Activated naive CD4-positive, alpha-beta T cell treated with anti-CD3 and anti-CD28 coated beads for 36 hours (primary cell): ENCODE measurements at regions of chr5 and their contacts with region 1.

Region 1: GRCh38 chr5:80255732-80256479 is at the start of gene SERINC5:
- DNase-seq: peak; percentile 86
- H3K4me3 Mint-ChIP-seq: peak within 1 kb of the TSS; percentile 97
- H3K27ac Mint-ChIP-seq: peak within 1 kb of the TSS; percentile 98
- H3K4me1 Mint-ChIP-seq: peaks cover 43% of the 10 kb centered on the region
- H3K27me3 Mint-ChIP-seq: no peaks in the 10 kb centered on the region
- total RNA-seq, gene SERINC5: 34.8 to 36.4 TPM

Region 2: DNA sequence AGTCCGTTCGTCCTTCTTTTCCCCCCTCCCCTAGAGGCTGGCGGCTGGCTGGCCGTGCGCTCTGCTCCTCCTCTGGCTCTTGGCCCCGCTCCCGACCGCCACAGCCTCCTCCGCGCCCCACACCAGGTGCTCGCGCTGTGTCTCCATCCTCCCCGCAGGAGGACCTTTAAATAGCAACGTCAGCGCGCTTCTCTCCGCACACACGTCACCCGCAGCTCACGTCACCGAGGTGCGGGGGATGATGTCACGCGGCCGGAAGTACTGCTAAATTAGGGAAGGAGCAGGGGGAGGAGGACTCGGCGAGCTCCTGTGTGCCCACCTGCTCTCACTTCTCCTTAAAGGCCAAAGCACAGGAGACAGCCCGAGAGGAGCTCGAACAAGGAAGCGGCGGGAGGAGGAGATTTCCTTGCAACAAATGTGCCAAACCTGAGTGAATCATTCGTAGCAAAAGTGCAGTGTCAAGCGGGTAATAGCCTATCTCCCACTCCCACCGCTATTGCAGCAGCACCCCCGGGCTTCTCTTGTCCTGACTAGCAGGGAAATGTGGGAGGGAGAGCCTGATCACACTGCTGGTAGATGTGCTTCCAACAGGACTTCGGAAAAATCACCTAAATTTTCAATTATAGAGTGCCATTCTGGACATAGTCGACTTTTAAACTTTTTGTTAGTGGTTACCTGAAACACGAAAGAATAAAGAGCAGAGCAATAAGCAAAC is 741.4 kb before region 1 on chr5:
- CTCF ChIA-PET with region 1: no interaction called
- intact Hi-C with region 1: loop called (anchors 10 kb)
- DNase-seq: peak; percentile 91
- H3K4me3 Mint-ChIP-seq: peak overlapping the region; percentile 96
- H3K27ac Mint-ChIP-seq: peak overlapping the region; percentile 93
- H3K4me1 Mint-ChIP-seq: peaks cover 33% of the 10 kb centered on the region
- H3K27me3 Mint-ChIP-seq: peaks cover 19% of the 10 kb centered on the region

Region 3: DNA sequence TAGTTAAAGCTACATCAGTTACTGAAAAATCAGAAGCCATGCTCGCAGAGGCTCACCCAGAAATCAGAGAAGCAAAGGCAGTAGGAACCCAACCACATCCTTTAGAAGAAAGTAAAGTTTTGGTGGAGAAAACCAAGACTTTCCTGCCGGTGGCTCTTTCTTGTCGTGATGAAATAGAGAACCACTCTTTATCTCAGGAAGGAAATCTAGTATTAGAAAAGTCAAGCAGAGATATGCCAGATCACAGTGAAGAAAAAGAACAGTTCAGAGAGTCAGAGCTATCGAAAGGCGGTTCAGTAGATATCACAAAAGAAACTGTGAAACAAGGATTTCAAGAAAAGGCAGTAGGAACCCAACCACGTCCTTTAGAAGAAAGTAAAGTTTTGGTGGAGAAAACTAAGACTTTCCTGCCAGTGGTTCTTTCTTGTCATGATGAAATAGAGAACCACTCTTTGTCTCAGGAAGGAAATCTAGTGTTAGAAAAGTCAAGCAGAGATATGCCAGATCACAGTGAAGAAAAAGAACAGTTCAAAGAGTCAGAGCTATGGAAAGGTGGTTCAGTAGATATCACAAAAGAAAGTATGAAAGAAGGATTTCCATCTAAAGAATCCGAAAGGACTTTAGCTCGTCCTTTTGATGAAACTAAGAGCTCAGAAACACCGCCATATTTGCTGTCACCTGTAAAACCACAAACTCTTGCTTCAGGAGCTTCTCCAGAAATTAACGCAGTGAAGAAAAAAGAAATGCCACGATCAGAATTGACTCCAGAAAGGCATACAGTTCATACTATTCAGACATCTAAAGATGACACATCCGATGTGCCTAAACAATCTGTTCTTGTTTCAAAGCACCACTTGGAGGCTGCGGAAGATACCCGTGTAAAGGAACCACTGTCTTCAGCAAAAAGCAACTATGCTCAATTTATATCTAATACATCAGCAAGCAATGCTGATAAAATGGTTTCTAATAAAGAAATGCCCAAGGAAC is 519.1 kb before region 1 on chr5:
- CTCF ChIA-PET with region 1: no interaction called
- intact Hi-C with region 1: no loop called
- DNase-seq: peak; percentile 28
- H3K4me3 Mint-ChIP-seq: peak overlapping the region; percentile 50
- H3K27ac Mint-ChIP-seq: peak overlapping the region; percentile 58
- H3K4me1 Mint-ChIP-seq: peaks cover 60% of the 10 kb centered on the region
- H3K27me3 Mint-ChIP-seq: peaks cover 31% of the 10 kb centered on the region

Region 4: GRCh38 chr5:80069918-80070318 is 186.0 kb before region 1 on chr5:
- CTCF ChIA-PET with region 1: no interaction called
- intact Hi-C with region 1: no loop called
- DNase-seq: no peak
- H3K4me3 Mint-ChIP-seq: no peak overlapping the region
- H3K27ac Mint-ChIP-seq: no peak overlapping the region
- H3K4me1 Mint-ChIP-seq: no peaks in the 10 kb centered on the region
- H3K27me3 Mint-ChIP-seq: no peaks in the 10 kb centered on the region

Region 5: DNA sequence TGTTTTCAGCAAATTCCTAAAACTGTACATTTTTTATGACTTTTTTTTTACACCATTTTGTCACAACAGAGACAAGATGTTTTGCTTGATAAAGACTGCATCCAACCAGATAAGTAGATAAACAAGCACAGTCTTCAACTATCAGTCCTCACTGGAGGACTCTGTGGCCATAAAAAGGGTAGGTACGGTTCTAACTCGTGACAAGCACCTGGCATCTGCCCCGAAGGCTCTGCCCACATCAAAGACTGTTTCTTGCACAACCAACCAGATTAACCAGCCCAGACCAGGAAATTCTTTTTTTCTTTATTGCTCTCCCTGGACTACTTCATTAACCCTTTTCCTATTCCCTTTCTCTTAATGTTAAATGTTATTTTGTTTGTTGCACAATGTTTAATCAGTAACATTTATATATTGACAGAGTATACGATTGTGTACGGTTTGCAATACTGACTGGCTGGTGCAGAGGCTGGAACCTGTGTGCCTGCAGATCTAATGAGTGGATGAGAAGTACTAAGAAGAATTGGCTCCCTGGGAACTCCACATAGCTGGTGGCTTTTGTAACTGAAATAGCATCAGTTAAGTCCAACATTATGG is 74.2 kb before region 1 on chr5:
- CTCF ChIA-PET with region 1: interaction called, 4 read pairs
- intact Hi-C with region 1: loop called (anchors 1 kb)
- DNase-seq: peak; percentile 69
- H3K4me3 Mint-ChIP-seq: peak overlapping the region; percentile 54
- H3K27ac Mint-ChIP-seq: peak overlapping the region; percentile 83
- H3K4me1 Mint-ChIP-seq: peaks cover 87% of the 10 kb centered on the region
- H3K27me3 Mint-ChIP-seq: no peaks in the 10 kb centered on the region

Region 6: DNA sequence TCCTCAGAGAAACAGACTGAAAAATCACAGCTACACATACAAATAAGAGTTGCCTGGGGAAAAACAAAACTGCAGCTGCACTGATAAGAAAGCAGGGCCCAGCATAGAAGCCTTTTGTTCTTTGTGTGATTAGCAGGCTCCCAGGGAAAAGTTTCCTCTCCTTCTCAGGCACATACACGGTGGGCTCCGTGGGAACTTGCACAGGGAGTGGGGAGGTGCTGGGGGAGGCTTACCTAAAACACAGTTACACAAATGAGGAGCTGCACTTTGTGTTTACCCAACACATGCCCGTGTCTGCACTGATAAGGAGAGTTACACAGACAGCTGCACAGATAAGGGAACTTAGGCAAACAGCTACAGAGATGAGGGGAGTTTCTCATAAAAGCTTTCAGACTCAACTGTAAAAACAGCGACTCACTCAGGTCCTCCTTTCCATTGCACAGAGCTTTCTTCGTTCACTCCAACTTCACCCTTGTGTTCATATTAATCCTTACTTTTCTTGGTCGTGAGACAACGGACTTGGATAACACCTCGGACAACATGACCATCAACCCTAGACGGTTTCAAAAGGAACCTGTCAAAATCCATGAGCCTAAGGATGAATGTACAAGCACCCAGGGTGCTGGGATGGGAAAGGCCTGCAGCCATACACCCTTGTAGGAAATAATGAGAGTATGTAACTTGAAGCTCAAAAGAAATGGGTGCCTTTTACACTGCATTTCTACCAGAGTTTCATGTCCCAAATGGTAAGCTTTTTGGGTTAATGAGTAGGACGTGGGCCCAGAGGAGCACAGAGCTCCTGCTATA is 50.9 kb before region 1 on chr5:
- CTCF ChIA-PET with region 1: interaction called, 10 read pairs
- intact Hi-C with region 1: no loop called
- DNase-seq: peak; percentile 46
- H3K4me3 Mint-ChIP-seq: no peak overlapping the region
- H3K27ac Mint-ChIP-seq: peak overlapping the region; percentile 88
- H3K4me1 Mint-ChIP-seq: peaks cover 82% of the 10 kb centered on the region
- H3K27me3 Mint-ChIP-seq: no peaks in the 10 kb centered on the region

Region 7: GRCh38 chr5:80238778-80239679 is 16.9 kb before region 1 on chr5:
- CTCF ChIA-PET with region 1: interaction called, 5 read pairs
- intact Hi-C with region 1: loop called (anchors 2 kb)
- DNase-seq: peak; percentile 6
- H3K4me3 Mint-ChIP-seq: peak overlapping the region; percentile 21
- H3K27ac Mint-ChIP-seq: peak overlapping the region; percentile 72
- H3K4me1 Mint-ChIP-seq: peaks cover 77% of the 10 kb centered on the region
- H3K27me3 Mint-ChIP-seq: no peaks in the 10 kb centered on the region

Region 8: GRCh38 chr5:80654391-80655230 is 398.7 kb after region 1 on chr5 and contains the starts of genes DHFR and MSH3:
- CTCF ChIA-PET with region 1: no interaction called
- intact Hi-C with region 1: loop called (anchors 2 kb)
- DNase-seq: peak; percentile 95
- H3K4me3 Mint-ChIP-seq: peak within 1 kb of the TSS; percentile 95
- H3K27ac Mint-ChIP-seq: peak within 1 kb of the TSS; percentile 99
- H3K4me1 Mint-ChIP-seq: peaks cover 25% of the 10 kb centered on the region
- H3K27me3 Mint-ChIP-seq: no peaks in the 10 kb centered on the region
- total RNA-seq, gene DHFR: 107 to 112 TPM
- total RNA-seq, gene MSH3: 25.1 to 25.8 TPM